CD8-positive, alpha-beta memory T cell (primary cell): ENCODE measurements at regions of chr17 and their contacts with region 1.

Region 1: GRCh38 chr17:78112518-78113226 is 15.9 kb downstream of the TMC6 start:
- DNase-seq: peak; percentile 69 to 83 (median 71)
- H3K4me3 ChIP-seq: no peak overlapping the region
- H3K4me3 Mint-ChIP-seq: peak overlapping the region in 5 of 7 donors; percentile 49 to 77 (median 71)
- H3K27ac ChIP-seq: no peak overlapping the region
- H3K27ac Mint-ChIP-seq: peak overlapping the region; percentile 23 to 97 (median 85)
- H3K4me1 ChIP-seq: peaks cover 34% of the 10 kb centered on the region
- H3K4me1 Mint-ChIP-seq: peaks cover 35 to 65% (median 35%) of the 10 kb centered on the region in 3 donors
- H3K27me3 ChIP-seq: no peaks in the 10 kb centered on the region
- H3K27me3 Mint-ChIP-seq: peaks cover 0 to 5% of the 10 kb centered on the region in 2 donors

Region 2: GRCh38 chr17:78128551-78129350 is 16.1 kb after region 1 on chr17 and contains the start of gene TMC6:
- CTCF ChIA-PET with region 1: interaction called, 100 read pairs
- POLR2A ChIA-PET with region 1: interaction called, 333 read pairs
- DNase-seq: peak; percentile 67 to 87 (median 80)
- H3K4me3 ChIP-seq: peak within 1 kb of the TSS; percentile 96
- H3K4me3 Mint-ChIP-seq: peak within 1 kb of the TSS; percentile 93 to 100 (median 99)
- H3K27ac ChIP-seq: peak within 1 kb of the TSS; percentile 87
- H3K27ac Mint-ChIP-seq: peak within 1 kb of the TSS; percentile 96 to 99 (median 98)
- H3K4me1 ChIP-seq: peaks cover 64% of the 10 kb centered on the region
- H3K4me1 Mint-ChIP-seq: peaks cover 42 to 72% (median 43%) of the 10 kb centered on the region in 3 donors
- H3K27me3 ChIP-seq: no peaks in the 10 kb centered on the region
- H3K27me3 Mint-ChIP-seq: peaks cover 0 to 3% of the 10 kb centered on the region in 2 donors
- total RNA-seq, gene TMC6: 150 TPM

Region 3: GRCh38 chr17:78133971-78134898 is 21.6 kb after region 1 on chr17:
- CTCF ChIA-PET with region 1: interaction called, 100 read pairs
- POLR2A ChIA-PET with region 1: interaction called, 333 read pairs
- DNase-seq: peak; percentile 73 to 90 (median 84)
- H3K4me3 ChIP-seq: peak overlapping the region; percentile 96
- H3K4me3 Mint-ChIP-seq: peak overlapping the region; percentile 79 to 100 (median 85)
- H3K27ac ChIP-seq: no peak overlapping the region
- H3K27ac Mint-ChIP-seq: peak overlapping the region; percentile 71 to 95 (median 88)
- H3K4me1 ChIP-seq: peaks cover 79% of the 10 kb centered on the region
- H3K4me1 Mint-ChIP-seq: peaks cover 62 to 80% (median 70%) of the 10 kb centered on the region in 3 donors
- H3K27me3 ChIP-seq: no peaks in the 10 kb centered on the region
- H3K27me3 Mint-ChIP-seq: peaks cover 0 to 3% of the 10 kb centered on the region in 2 donors

Region 4: GRCh38 chr17:78140169-78140976 is 27.7 kb after region 1 on chr17:
- CTCF ChIA-PET with region 1: interaction called, 100 read pairs
- POLR2A ChIA-PET with region 1: interaction called, 333 read pairs
- DNase-seq: peak; percentile 92 to 95 (median 94)
- H3K4me3 ChIP-seq: peak overlapping the region; percentile 12
- H3K4me3 Mint-ChIP-seq: peak overlapping the region; percentile 32 to 82 (median 64)
- H3K27ac ChIP-seq: peak overlapping the region; percentile 54
- H3K27ac Mint-ChIP-seq: peak overlapping the region; percentile 87 to 95 (median 92)
- H3K4me1 ChIP-seq: peaks cover 76% of the 10 kb centered on the region
- H3K4me1 Mint-ChIP-seq: peaks cover 47 to 85% (median 59%) of the 10 kb centered on the region in 3 donors
- H3K27me3 ChIP-seq: no peaks in the 10 kb centered on the region
- H3K27me3 Mint-ChIP-seq: no peaks in the 10 kb centered on the region

Region 5: GRCh38 chr17:78250891-78251794 is 138.5 kb after region 1 on chr17:
- CTCF ChIA-PET with region 1: interaction called, 13 read pairs
- POLR2A ChIA-PET with region 1: interaction called, 7 read pairs
- DNase-seq: peak; percentile 74 to 85 (median 77)
- H3K4me3 ChIP-seq: peak overlapping the region; percentile 77
- H3K4me3 Mint-ChIP-seq: peak overlapping the region; percentile 72 to 84 (median 80)
- H3K27ac ChIP-seq: peak overlapping the region; percentile 20
- H3K27ac Mint-ChIP-seq: peak overlapping the region; percentile 16 to 97 (median 94)
- H3K4me1 ChIP-seq: peaks cover 57% of the 10 kb centered on the region
- H3K4me1 Mint-ChIP-seq: peaks cover 33 to 53% (median 39%) of the 10 kb centered on the region in 3 donors
- H3K27me3 ChIP-seq: no peaks in the 10 kb centered on the region
- H3K27me3 Mint-ChIP-seq: peaks cover 0 to 2% of the 10 kb centered on the region in 2 donors